IMR-90 (cell line): ENCODE measurements at regions of chr4 and their contacts with region 1.

Region 1: DNA sequence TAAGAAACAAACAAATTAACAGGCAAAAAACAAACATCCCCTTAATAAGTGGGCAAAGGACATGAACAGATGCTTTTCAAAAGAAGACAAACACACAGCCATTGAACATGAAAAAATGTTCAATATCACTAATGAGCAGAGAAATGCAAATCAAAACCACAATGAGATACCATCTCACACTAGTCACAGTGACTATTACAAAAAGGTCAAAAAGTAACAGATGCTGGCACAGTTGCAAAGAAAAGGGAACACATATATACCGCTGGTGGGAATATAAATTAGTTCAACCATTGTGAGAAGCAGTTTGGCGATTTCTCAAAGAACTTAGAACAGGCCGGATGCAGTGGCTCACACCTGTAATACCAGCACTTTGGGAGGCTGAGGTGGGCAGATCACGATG is 146.1 kb upstream of the NEIL3 start:
- DNase-seq: peak; percentile 27
- ATAC-seq: no peak
- H3K4me3 ChIP-seq: no peak overlapping the region
- H3K27ac ChIP-seq: no peak overlapping the region
- H3K4me1 ChIP-seq: no peaks in the 10 kb centered on the region
- H3K27me3 ChIP-seq: no peaks in the 10 kb centered on the region
- CTCF ChIP-seq: no peak
- POLR2A ChIP-seq: no peak
- RAD21 ChIP-seq: no peak

Region 2: DNA sequence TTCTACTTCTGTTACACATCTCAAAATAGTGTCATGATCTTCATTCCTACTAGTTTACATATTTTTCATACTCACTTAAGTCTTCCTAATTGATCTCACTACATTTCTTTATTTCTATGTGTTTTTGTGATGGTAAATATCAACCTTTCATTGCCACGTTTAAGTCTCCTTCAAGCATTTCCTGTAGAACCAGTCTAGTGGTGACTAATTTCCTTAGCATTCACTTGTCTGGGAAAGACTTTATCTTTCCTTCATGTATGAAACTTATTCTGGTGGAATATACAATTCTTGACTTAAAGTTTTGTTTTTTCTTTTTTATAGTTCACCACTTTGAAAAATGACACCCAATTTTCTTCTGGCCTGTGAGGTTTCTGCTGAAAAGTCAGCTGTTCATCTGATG is 35.2 kb before region 1 on chr4:
- CTCF ChIA-PET with region 1: no interaction called
- POLR2A ChIA-PET with region 1: no interaction called
- dilution Hi-C with region 1: no loop called
- in situ Hi-C with region 1: no loop called
- intact Hi-C with region 1: loop called (anchors 5 kb)
- DNase-seq: peak; percentile 72
- ATAC-seq: no peak; the same call in 1 of the 2 replicates
- H3K4me3 ChIP-seq: no peak overlapping the region
- H3K27ac ChIP-seq: no peak overlapping the region
- H3K4me1 ChIP-seq: peaks cover 2% of the 10 kb centered on the region; the same call in 1 of the 2 replicates
- H3K27me3 ChIP-seq: no peaks in the 10 kb centered on the region
- CTCF ChIP-seq: no peak
- POLR2A ChIP-seq: no peak
- RAD21 ChIP-seq: no peak